Heart left ventricle (tissue), 16 donors: ENCODE measurements at regions of chr6 and their contacts with region 1.

Region 1: DNA sequence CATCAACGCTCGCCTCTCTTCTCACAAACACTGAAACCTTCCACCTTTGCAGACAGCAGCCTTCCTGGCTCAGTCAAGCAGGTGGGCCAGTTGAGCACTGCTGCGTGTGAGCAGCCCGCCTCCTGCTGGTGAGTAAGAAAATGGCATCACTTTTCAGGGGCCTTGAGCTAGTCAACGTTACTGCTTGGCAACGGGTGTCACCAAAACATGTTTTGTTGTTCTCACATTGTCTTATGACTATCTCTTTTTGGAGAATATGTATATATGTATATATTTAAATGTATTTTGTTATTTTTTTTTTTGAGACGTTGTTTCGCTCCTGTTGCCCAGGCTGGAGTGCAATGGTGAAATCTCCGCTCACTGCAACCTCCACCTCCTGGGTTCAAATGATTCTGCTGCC is 97.0 kb upstream of the AGPAT4 start:
- DNase-seq: peak in 4 of 5 donors; percentile 43 to 59 (median 49)
- ATAC-seq: peak; percentile 47 to 73 (median 56)
- H3K4me3 ChIP-seq: no peak overlapping the region
- H3K27ac ChIP-seq: no peak overlapping the region
- H3K4me1 ChIP-seq: peaks cover 0 to 12% (median 0%) of the 10 kb centered on the region in 12 donors
- H3K27me3 ChIP-seq: no peaks in the 10 kb centered on the region
- CTCF ChIP-seq: peak; percentile 77 to 92 (median 90)
- POLR2A ChIP-seq: no peak

Region 2: DNA sequence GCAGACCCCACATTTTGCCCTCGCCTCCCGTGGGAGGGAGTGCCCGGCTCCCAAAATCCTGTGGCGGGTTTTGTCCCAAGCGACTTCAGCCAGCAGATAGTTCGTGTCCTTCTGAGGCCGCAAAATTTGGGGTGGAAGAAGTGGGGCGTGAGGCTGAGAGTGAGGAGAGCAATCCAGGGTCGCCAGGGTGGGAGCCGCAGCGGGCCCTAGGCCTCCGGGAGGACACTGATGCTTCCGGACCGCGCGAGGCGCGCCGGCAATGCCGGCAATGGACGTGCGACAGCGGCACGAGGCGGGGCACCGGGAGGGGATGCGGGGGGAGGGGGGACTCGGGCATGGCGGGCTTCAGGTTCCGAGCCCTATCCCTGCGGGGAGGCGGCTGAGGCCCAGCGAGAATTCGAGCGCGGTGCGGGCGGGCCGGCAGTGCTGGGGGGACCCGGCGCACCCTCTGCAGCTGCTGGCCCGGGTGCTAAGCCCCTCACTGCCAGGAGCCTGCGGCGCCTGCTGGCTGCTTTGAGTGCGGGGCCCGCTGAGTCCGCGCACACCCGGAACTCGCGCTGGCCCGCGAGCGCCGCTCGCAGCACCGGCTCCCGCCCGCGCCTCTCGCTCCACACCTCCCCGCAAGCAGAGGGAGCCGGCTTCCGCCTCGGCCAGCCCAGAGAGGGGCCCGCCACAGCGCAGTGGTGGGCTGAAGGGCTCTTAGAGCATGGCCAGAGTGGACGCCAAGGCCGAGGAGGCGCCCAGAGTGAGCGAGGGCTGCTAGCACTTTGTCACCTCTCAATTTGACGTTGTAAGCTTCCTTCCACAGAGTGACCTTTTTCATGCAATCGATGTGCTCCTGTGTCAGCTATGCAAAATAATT is 850.6 kb before region 1 on chr6:
- intact Hi-C with region 1: loop called in 1 of 10 experiments (anchors 10 kb)
- DNase-seq: peak; percentile 48 to 87 (median 76)
- ATAC-seq: peak; percentile 86 to 96 (median 94)
- H3K4me3 ChIP-seq: peak overlapping the region; percentile 58 to 78 (median 71)
- H3K27ac ChIP-seq: peak overlapping the region in 11 of 12 donors; percentile 26 to 80 (median 44)
- H3K4me1 ChIP-seq: peaks cover 0 to 14% (median 0%) of the 10 kb centered on the region in 12 donors
- H3K27me3 ChIP-seq: peaks cover 0 to 8% (median 0%) of the 10 kb centered on the region in 9 donors
- CTCF ChIP-seq: peak in 5 of 12 donors; percentile 11 to 94 (median 93)
- POLR2A ChIP-seq: no peak

Region 3: DNA sequence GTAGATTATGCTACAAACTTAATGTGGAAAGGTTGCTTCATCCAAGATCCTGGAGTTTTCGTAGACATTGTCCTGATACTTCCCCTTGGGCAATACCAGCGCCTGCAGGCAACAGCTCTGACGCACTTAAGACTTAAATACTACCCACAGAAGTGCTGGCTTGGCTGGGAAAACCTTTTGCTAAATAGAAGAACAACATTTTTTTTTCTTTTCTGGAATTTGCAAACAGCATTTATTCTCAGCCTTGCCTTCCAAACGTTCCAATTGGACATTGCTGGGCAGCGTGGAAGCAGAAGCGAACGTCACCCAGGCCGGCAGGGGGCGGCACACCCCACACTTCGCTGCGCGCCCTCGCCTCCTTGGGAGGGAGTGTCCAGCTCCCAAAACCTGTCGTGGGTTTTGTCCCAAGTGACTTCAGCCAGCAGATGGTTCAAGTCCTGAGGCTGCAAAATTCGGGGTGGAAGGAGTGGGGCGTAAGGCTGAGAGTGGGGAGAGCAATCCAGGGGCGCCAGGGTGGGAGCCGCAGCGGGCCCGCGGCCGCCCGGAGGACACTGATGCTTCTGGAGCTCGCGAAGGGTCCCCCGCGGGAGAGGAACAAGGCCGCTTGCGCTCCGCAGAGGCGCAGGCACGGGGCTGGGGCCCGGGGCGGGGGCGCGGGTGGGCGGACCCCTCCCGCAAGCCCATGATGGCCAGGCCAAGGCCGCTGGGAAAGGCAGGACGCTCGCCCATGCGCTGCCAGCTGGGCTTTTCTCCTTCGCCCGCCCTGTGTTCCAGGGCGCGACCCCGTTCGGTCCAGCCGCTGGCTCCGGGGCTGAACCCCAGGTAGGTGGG is 440.1 kb before region 1 on chr6:
- intact Hi-C with region 1: loop called (anchors 1 to 5 kb)
- DNase-seq: peak; percentile 72 to 88 (median 78)
- ATAC-seq: peak; percentile 85 to 98 (median 93)
- H3K4me3 ChIP-seq: peak overlapping the region; percentile 25 to 70 (median 52)
- H3K27ac ChIP-seq: peak overlapping the region in 1 of 12 donors; percentile 22
- H3K4me1 ChIP-seq: peaks cover 0 to 9% (median 0%) of the 10 kb centered on the region in 12 donors
- H3K27me3 ChIP-seq: peaks cover 0 to 22% (median 0%) of the 10 kb centered on the region in 9 donors
- CTCF ChIP-seq: peak; percentile 82 to 95 (median 90)
- POLR2A ChIP-seq: no peak

Region 4: GRCh38 chr6:161101517-161101916 is 269.4 kb before region 1 on chr6:
- intact Hi-C with region 1: loop called in 8 of 10 experiments (anchors 5 to 10 kb)
- DNase-seq: no peak
- ATAC-seq: no peak
- H3K4me3 ChIP-seq: no peak overlapping the region
- H3K27ac ChIP-seq: no peak overlapping the region
- H3K4me1 ChIP-seq: no peaks in the 10 kb centered on the region
- H3K27me3 ChIP-seq: no peaks in the 10 kb centered on the region
- CTCF ChIP-seq: peak in 4 of 12 donors; percentile 11 to 19 (median 16)
- POLR2A ChIP-seq: no peak

Region 5: GRCh38 chr6:161152907-161153662 is 217.8 kb before region 1 on chr6:
- intact Hi-C with region 1: loop called (anchors 2 to 10 kb)
- DNase-seq: no peak
- ATAC-seq: peak; percentile 38 to 65 (median 50)
- H3K4me3 ChIP-seq: no peak overlapping the region
- H3K27ac ChIP-seq: no peak overlapping the region
- H3K4me1 ChIP-seq: peaks cover 0 to 3% (median 0%) of the 10 kb centered on the region in 12 donors
- H3K27me3 ChIP-seq: no peaks in the 10 kb centered on the region
- CTCF ChIP-seq: peak in 11 of 12 donors; percentile 19 to 53 (median 42)
- POLR2A ChIP-seq: no peak